ENCODE measurements at regions of chr5 and their contacts with region 1.

Region 1: DNA sequence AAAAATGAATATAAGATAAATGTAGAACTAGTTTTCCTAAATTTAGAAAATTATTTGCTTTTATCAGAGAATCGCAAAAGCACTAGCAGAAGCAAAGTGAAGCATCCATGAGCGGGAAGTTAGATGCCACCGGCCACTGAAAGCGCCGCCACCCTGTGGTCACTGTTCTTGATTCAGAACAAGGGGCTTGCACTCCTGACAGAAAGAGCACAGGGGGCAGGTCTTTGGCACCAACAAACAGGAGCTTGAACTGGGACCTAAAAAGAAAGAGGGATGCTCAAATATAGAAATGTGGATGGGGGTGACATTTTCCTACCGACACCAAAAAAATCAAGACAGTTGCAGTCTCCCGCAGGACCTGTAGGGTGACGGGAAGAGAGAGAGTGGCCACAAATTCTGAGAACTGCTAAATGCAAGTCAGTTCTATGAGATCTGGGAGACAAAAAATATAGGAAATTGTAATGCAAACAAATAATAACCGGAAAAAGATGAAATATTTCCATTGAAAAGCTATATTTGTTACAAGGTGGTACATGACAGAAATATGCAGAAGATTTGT is 144.3 kb downstream of the CDH12 start:
- DNase-seq: peak; percentile 13 to 59
- H3K4me3 ChIP-seq: no peak overlapping the region
- H3K27ac ChIP-seq: no peak overlapping the region
- H3K4me1 ChIP-seq: no peaks in the 10 kb centered on the region
- H3K27me3 ChIP-seq: no peaks in the 10 kb centered on the region
- CTCF ChIP-seq: peak; percentile 6 to 47 (median 28)
- EP300 ChIP-seq: no peak
- POLR2A ChIP-seq: no peak
- RAD21 ChIP-seq: peak; percentile 41 to 55

Region 2: DNA sequence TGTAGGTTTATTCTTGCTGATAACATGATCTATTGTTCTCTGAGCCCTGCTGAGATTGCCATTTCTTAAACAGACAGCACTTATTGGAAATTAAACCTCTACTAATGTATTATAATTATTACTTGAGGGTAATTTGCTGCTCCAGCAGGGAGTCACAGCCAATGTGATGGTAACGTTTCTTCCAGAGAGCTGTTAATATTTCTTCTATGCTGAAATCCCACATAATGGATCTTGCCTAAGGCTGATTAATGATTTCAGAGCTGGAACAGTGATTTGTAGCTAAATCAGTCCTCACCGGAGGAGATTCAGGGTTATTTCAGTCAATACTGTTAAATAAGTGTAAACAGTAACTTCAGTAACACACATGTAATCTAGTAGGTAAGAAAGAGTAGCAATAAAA is 25.8 kb before region 1 on chr5:
- CTCF ChIA-PET with region 1: interaction called, 13 read pairs
- POLR2A ChIA-PET with region 1: no interaction called
- DNase-seq: no peak
- H3K4me3 ChIP-seq: no peak overlapping the region
- H3K27ac ChIP-seq: no peak overlapping the region
- H3K4me1 ChIP-seq: no peaks in the 10 kb centered on the region
- H3K27me3 ChIP-seq: no peaks in the 10 kb centered on the region
- CTCF ChIP-seq: no peak
- EP300 ChIP-seq: no peak
- POLR2A ChIP-seq: no peak
- RAD21 ChIP-seq: no peak

Region 3: DNA sequence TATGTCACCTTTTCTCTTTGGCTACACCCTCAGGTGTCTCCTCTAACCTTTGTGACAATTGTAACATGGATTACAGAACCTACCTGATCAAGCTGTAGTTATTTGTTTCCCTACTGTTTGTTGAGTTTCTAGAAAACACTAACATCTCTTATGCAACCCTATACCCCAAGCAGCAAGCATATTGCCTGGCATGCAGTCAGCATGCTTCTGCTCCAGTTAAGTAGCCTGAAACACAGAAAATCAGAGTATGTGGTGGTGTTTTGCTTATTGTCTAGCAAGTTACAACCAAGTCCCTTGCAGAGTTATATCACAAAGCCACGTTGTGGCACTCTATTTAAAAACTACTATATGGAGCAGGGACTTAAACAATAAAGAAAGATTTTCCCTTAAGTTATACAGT is 13.2 kb after region 1 on chr5:
- CTCF ChIA-PET with region 1: interaction called, 10 read pairs
- POLR2A ChIA-PET with region 1: no interaction called
- DNase-seq: no peak
- H3K4me3 ChIP-seq: no peak overlapping the region
- H3K27ac ChIP-seq: no peak overlapping the region
- H3K4me1 ChIP-seq: no peaks in the 10 kb centered on the region
- H3K27me3 ChIP-seq: no peaks in the 10 kb centered on the region
- CTCF ChIP-seq: no peak
- EP300 ChIP-seq: no peak
- POLR2A ChIP-seq: no peak
- RAD21 ChIP-seq: no peak

Measured in H1 (cell line).